ENCODE measurements at regions of chr3 and their contacts with region 1.

Region 1: GRCh38 chr3:153026026-153026425 is 136.0 kb upstream of the RAP2B start:
- DNase-seq: peak; percentile 31
- ATAC-seq: no peak
- H3K4me3 ChIP-seq: no peak overlapping the region
- H3K27ac ChIP-seq: no peak overlapping the region
- H3K4me1 ChIP-seq: peaks cover 0 to 4% of the 10 kb centered on the region in 2 experiments; a peak in 1 of 4 replicates
- H3K27me3 ChIP-seq: no peaks in the 10 kb centered on the region
- CTCF ChIP-seq: peak; percentile 42 to 86 (median 81)
- POLR2A ChIP-seq: no peak
- RAD21 ChIP-seq: peak; percentile 87

Region 2: DNA sequence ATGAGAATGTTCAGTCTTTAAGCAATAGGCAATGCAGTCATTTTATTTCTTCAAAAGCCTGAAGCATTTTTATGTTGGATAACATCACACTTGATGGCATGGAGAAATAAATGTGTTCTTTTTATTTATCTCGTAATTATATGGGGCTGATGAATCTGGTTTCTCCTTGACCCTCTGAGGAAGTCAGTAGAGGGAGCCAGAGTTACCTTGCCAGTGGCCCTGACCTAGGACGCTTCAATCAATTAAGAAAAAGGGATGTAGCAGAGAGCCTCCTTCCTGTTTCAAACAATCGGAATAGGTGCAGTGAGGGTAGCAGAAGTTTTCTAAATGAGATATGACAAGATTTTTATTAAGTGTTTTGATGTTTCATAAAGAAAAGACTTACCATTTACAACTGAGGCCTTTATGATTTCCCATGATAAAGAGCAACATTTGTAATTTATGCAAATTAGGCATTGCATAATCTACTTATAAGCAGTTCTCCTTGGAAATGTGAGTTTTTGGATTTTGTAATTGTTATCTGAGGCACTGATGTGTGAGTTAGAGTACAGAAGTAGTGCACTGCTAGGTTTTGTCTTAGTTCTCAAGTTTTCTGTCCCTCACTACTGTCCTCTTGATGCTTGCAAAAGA is 265.1 kb after region 1 on chr3:
- CTCF ChIA-PET with region 1: no interaction called
- POLR2A ChIA-PET with region 1: no interaction called
- RAD21 ChIA-PET with region 1: no interaction called
- intact Hi-C with region 1: loop called (anchors 5 kb)
- DNase-seq: peak; percentile 44
- ATAC-seq: peak; percentile 98
- H3K4me3 ChIP-seq: no peak overlapping the region
- H3K27ac ChIP-seq: no peak overlapping the region
- H3K4me1 ChIP-seq: peaks cover 0 to 13% of the 10 kb centered on the region in 2 experiments; a peak in 2 of 4 replicates
- H3K27me3 ChIP-seq: no peaks in the 10 kb centered on the region
- CTCF ChIP-seq: peak; percentile 55 to 75 (median 57); a peak in 5 of 6 replicates
- POLR2A ChIP-seq: no peak
- RAD21 ChIP-seq: peak; percentile 71

Region 3: GRCh38 chr3:153595186-153595815 is 569.3 kb after region 1 on chr3:
- CTCF ChIA-PET with region 1: interaction called, 3 read pairs
- POLR2A ChIA-PET with region 1: no interaction called
- RAD21 ChIA-PET with region 1: no interaction called
- intact Hi-C with region 1: loop called (anchors 1 kb)
- DNase-seq: peak; percentile 24
- ATAC-seq: peak; percentile 88
- H3K4me3 ChIP-seq: no peak overlapping the region
- H3K27ac ChIP-seq: no peak overlapping the region
- H3K4me1 ChIP-seq: peaks cover 0 to 9% of the 10 kb centered on the region in 2 experiments; a peak in 2 of 4 replicates
- H3K27me3 ChIP-seq: no peaks in the 10 kb centered on the region
- CTCF ChIP-seq: peak; percentile 79 to 85 (median 85)
- POLR2A ChIP-seq: no peak
- RAD21 ChIP-seq: peak; percentile 86

Region 4: GRCh38 chr3:153927107-153927506 is 901.1 kb after region 1 on chr3:
- CTCF ChIA-PET with region 1: no interaction called
- POLR2A ChIA-PET with region 1: no interaction called
- RAD21 ChIA-PET with region 1: no interaction called
- intact Hi-C with region 1: loop called (anchors 5 kb)
- DNase-seq: peak; percentile 12
- ATAC-seq: peak; percentile 72
- H3K4me3 ChIP-seq: no peak overlapping the region
- H3K27ac ChIP-seq: no peak overlapping the region
- H3K4me1 ChIP-seq: no peaks in the 10 kb centered on the region
- H3K27me3 ChIP-seq: no peaks in the 10 kb centered on the region
- CTCF ChIP-seq: peak; percentile 14 to 48 (median 38); a peak in 4 of 6 replicates
- POLR2A ChIP-seq: no peak
- RAD21 ChIP-seq: peak; percentile 64

Region 5: GRCh38 chr3:154252759-154253638 is 1227.0 kb after region 1 on chr3:
- CTCF ChIA-PET with region 1: no interaction called
- POLR2A ChIA-PET with region 1: no interaction called
- RAD21 ChIA-PET with region 1: no interaction called
- intact Hi-C with region 1: loop called (anchors 10 kb)
- DNase-seq: peak; percentile 71
- ATAC-seq: peak; percentile 95
- H3K4me3 ChIP-seq: no peak overlapping the region
- H3K27ac ChIP-seq: no peak overlapping the region
- H3K4me1 ChIP-seq: no peaks in the 10 kb centered on the region
- H3K27me3 ChIP-seq: no peaks in the 10 kb centered on the region
- CTCF ChIP-seq: peak; percentile 82 to 93 (median 84)
- POLR2A ChIP-seq: no peak
- RAD21 ChIP-seq: peak; percentile 86